ENCODE measurements at regions of chr1 and their contacts with region 1.

Region 1: DNA sequence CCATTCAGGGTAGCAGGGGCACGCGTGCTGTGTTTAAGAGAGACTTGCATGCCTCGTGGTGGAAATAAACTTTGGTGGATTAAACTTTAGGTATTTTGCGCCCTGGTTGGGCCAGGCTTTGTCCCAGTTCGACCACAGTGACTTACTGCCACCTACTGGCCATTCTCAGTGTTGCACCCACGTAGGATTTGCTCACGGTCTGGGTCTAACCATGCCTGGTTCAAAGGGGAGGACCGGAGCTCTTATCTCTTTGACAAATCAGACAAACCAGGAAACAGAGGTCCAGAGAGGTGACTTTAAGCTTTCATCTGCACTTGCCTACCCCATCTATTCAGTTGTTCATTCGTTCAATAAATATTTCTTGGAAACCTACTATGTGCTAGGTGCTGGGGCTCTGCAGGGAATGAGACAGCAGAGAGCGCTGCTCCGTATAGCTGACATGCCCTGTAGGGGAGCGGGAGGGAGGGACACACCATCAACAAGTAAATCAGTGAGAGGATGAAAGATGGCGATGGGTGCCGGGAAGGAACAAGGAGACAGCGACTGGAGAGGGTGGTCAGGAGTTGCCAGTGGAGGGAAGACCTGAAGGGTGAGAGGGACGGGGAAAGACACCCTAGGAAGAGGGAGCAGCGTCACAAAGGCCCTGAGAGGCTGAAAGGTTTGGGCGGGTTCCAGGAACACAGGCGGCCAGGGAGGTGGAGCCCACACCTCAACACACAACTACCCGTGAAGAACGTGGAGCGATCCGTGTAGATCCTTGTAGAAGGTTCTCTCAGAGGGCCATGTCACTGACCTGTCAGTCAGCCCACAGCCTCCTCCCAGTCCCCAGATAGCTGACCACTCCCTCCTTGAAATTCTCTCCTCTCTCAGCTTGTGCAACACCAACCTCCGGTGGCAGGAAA is 27.2 kb upstream of the TINAGL1 start:
- DNase-seq: peak; percentile 84 to 85
- ATAC-seq: peak; percentile 89 to 95 (median 92)
- H3K4me3 ChIP-seq: peak overlapping the region; percentile 36
- H3K27ac ChIP-seq: peak overlapping the region; percentile 70
- H3K4me1 ChIP-seq: no peaks in the 10 kb centered on the region
- H3K27me3 ChIP-seq: peaks cover 0 to 3% (median 0%) of the 10 kb centered on the region in 3 donors
- CTCF ChIP-seq: peak; percentile 96

Region 2: GRCh38 chr1:30790850-30791778 is 758.0 kb before region 1 on chr1:
- intact Hi-C with region 1: loop called in 1 of 2 experiments (anchors 10 kb)
- DNase-seq: no peak
- ATAC-seq: no peak
- H3K4me3 ChIP-seq: no peak overlapping the region
- H3K27ac ChIP-seq: no peak overlapping the region
- H3K4me1 ChIP-seq: no peaks in the 10 kb centered on the region
- H3K27me3 ChIP-seq: peaks cover 0 to 6% (median 0%) of the 10 kb centered on the region in 3 donors
- CTCF ChIP-seq: no peak

Region 3: DNA sequence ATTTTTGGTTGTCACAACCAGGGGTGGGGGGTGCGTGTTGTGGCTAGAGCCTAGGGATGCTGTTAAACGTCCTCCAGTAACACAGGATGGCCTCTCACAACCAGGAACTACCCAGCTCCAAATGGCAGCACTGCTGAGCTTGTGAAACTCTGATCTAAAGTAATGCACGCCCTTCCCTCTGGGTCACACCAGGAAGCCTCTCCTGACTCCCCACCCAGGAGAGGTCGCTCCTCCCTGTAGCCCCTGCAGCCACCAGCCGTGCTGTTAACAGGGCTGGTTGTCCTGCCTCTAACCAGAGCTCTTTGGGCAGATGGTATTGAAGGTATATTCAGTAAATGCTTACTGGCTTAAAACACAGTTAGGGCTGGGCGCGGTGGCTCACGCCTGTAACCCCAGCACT is 382.7 kb before region 1 on chr1:
- intact Hi-C with region 1: loop called (anchors 5 kb)
- DNase-seq: no peak
- ATAC-seq: no peak
- H3K4me3 ChIP-seq: no peak overlapping the region
- H3K27ac ChIP-seq: no peak overlapping the region
- H3K4me1 ChIP-seq: peaks cover 5% of the 10 kb centered on the region
- H3K27me3 ChIP-seq: no peaks in the 10 kb centered on the region
- CTCF ChIP-seq: no peak

Region 4: GRCh38 chr1:31394628-31395193 is 154.4 kb before region 1 on chr1:
- intact Hi-C with region 1: loop called (anchors 1 to 5 kb)
- DNase-seq: peak; percentile 91 to 97
- ATAC-seq: peak; percentile 97 to 99 (median 98)
- H3K4me3 ChIP-seq: peak overlapping the region; percentile 53
- H3K27ac ChIP-seq: peak overlapping the region; percentile 86
- H3K4me1 ChIP-seq: peaks cover 5% of the 10 kb centered on the region
- H3K27me3 ChIP-seq: no peaks in the 10 kb centered on the region
- CTCF ChIP-seq: peak; percentile 92

Region 5: GRCh38 chr1:31434979-31435378 is 114.2 kb before region 1 on chr1:
- intact Hi-C with region 1: no loop called
- DNase-seq: no peak
- ATAC-seq: peak; percentile 37 to 58 (median 50)
- H3K4me3 ChIP-seq: no peak overlapping the region
- H3K27ac ChIP-seq: no peak overlapping the region
- H3K4me1 ChIP-seq: no peaks in the 10 kb centered on the region
- H3K27me3 ChIP-seq: no peaks in the 10 kb centered on the region
- CTCF ChIP-seq: no peak

Region 6: DNA sequence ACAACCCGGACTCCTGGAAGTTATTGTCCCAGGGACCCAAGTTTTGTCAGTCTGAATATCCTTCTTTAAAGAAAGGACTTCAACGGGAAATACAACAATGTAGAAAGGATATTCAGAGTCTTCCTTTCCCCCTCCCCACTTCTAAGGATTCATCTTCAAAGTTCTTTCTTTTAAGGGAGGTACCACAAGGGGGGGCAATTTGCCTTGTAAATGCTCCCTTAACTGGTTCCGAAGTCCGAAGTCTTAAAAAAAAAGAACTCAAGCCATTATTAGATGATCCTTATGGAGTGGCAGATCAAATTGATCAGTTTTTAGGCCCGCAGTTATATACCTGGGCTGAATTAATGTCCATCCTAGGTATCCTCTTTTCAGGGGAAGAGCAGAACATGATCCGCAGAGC is 89.1 kb before region 1 on chr1:
- intact Hi-C with region 1: loop called (anchors 5 to 10 kb)
- DNase-seq: no peak
- ATAC-seq: no peak
- H3K4me3 ChIP-seq: no peak overlapping the region
- H3K27ac ChIP-seq: no peak overlapping the region
- H3K4me1 ChIP-seq: no peaks in the 10 kb centered on the region
- H3K27me3 ChIP-seq: peaks cover 0 to 4% (median 3%) of the 10 kb centered on the region in 3 donors
- CTCF ChIP-seq: no peak

Measured in psoas muscle (tissue), 8 donors.